ENCODE measurements at regions of chr17 and their contacts with region 1.

Region 1: GRCh38 chr17:65231662-65232335 is 94.6 kb downstream of the RGS9 start:
- DNase-seq: peak in 2 of 3 donors; percentile 56 to 69
- ATAC-seq: peak; percentile 88
- H3K4me3 ChIP-seq: no peak overlapping the region
- H3K4me1 ChIP-seq: peaks cover 3% of the 10 kb centered on the region
- CTCF ChIP-seq: peak; percentile 33

Region 2: DNA sequence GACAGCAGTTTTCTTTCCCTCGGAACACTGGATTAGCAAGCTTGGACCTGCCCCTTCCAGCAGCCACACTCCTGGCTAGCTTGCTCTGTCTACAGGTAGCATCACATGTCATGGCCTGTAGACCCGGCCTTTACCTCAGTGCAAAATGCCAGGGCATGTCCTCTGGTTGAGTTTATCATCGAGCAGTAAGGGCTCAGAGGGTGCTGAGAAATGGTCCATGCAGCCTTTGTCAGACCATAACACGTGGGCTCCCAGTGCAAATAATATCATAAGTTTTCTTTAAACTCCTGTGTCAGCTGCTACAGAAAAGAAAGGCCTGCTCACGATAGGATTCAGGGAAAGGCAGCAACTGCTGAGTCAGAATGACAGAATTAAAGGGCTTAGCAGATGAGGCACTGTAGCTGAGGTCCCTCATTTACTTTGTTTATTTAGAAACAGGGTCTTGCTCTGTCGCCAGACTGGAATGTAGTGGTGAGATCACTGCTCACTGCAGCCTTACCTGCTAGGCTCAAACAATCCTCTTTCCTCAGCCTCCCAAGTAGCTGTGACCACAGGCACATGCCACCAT is 167.3 kb before region 1 on chr17:
- intact Hi-C with region 1: no loop called
- DNase-seq: no peak
- ATAC-seq: no peak
- H3K4me3 ChIP-seq: no peak overlapping the region
- H3K4me1 ChIP-seq: peaks cover 6% of the 10 kb centered on the region
- CTCF ChIP-seq: no peak

Region 3: DNA sequence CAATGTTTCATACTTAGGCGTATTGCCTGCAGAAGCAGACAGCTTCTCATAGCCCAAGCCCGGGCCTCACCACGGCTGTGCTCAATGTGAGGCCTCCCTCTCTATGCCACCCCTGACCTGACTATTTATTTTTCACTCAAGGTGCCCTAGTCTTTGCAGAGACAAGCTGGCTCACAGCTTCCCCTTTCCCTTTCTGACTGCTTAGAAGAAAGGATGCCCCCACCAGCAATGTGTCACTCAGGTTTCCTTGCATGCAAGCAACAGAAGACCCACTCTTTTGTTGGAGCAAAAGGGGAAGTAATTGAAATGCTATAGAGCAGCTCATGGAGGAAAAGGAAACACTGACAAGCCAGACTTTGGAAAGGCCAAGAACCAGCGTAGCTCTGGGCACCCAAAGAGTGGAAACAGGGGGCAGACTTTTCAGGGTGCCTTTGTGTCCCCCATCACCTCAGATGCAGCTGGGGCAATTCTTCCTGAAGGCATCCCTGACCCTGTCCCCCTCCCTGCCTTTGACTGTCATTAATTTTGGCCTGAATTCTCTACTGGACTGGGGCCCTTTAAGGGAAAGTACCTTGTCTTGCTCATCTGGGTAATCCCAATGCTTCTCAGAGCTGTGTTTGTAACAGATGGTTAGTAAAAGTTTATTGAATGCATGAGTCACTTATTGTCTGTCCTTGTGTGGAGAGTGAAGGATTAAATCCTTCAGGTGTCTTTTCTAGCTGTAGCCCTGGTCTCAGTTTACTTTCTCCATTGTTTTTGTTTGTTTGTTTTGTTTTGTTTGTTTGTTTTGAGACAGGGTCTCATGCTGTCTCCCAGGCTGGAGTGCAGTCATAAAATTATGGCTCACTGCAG is 76.8 kb before region 1 on chr17:
- intact Hi-C with region 1: no loop called
- DNase-seq: peak in 2 of 3 donors; percentile 22 to 32
- ATAC-seq: peak; percentile 83
- H3K4me3 ChIP-seq: no peak overlapping the region
- H3K4me1 ChIP-seq: peaks cover 19% of the 10 kb centered on the region
- CTCF ChIP-seq: no peak

Region 4: DNA sequence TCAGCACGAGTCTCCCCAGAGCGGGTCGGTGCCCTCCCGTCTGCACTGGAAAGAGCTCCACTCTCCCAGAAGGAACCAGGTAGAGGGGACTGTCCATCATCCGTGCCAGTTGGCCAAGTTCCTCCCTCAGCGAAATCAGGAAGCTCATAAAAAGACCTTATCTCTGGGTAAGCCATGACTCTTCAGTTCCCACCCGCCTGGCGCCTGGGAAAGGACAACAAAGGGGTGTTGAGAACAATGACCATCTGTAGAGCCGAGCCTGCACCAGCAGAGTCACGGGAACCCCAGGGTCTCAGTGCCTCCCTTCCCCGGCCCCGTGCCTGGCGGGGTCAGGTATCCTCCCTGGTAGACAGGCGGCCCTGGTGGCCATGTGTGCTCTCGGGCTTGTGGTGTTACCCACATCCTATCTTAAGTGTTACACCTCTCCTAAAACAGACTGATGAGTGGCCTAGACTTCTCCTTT is 138.9 kb after region 1 on chr17:
- intact Hi-C with region 1: no loop called
- DNase-seq: peak; percentile 87 to 92 (median 89)
- ATAC-seq: peak; percentile 92
- H3K4me3 ChIP-seq: no peak overlapping the region
- H3K4me1 ChIP-seq: peaks cover 11% of the 10 kb centered on the region
- CTCF ChIP-seq: no peak

Region 5: GRCh38 chr17:66165513-66166123 is 933.8 kb after region 1 on chr17:
- intact Hi-C with region 1: loop called in 1 of 2 experiments (anchors 10 kb)
- DNase-seq: peak in 1 of 3 donors; percentile 30
- ATAC-seq: peak; percentile 60
- H3K4me3 ChIP-seq: no peak overlapping the region
- H3K4me1 ChIP-seq: no peaks in the 10 kb centered on the region
- CTCF ChIP-seq: peak; percentile 36